ENCODE measurements at regions of chr20 and their contacts with region 1.

Region 1: GRCh38 chr20:47356526-47357295 is at the start of gene ZMYND8:
- DNase-seq: peak; percentile 87 to 99 (median 92)
- H3K4me3 ChIP-seq: no peak within 1 kb of the TSS
- H3K27ac ChIP-seq: peak within 1 kb of the TSS; percentile 83 to 95
- H3K4me1 ChIP-seq: peaks cover 54% of the 10 kb centered on the region
- H3K27me3 ChIP-seq: no peaks in the 10 kb centered on the region
- CTCF ChIP-seq: no peak
- EP300 ChIP-seq: no peak
- POLR2A ChIP-seq: no peak
- total RNA-seq, gene ZMYND8: 20.3 to 40.7 (median 31.2) TPM

Region 2: DNA sequence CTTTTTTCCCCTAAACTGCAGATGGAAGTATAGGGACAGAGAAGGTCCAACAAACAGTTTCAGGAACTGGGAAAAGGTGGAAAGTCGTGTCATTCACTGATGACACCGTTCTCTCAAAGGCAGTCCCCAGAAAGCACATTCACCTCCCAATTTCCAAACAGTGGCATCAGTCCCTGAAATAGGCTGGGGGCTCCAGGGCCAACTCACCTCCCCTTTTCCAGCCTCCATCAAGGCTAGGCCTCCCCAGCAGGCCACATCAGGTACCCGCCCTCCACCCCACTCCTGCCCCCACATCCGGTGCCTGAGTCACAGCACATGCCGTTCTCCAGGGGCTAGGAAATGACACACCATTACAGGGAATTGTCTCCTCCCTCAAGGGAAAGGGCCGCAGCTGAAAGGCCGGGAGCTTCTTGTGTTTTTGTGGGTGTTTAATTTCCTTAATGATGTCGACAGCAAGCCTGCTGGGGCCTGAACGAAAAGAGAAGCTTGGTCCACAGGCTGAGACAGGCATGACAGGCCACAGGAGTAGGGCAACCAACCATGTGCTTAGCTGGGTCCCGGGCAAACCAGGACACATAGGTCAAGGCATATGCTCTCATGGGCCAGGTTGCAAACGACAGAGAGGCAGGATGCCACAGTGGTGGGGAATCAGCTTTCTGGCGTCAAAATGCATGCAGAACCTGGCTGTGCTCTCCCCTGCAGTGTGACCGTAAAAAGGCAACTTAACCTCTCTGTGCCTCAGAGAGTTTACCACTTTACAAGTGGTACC is 39.4 kb before region 1 on chr20:
- intact Hi-C with region 1: loop called (anchors 2 to 5 kb)
- DNase-seq: peak; percentile 63 to 85 (median 73)
- H3K4me3 ChIP-seq: no peak overlapping the region
- H3K27ac ChIP-seq: peak overlapping the region; percentile 94 to 95
- H3K4me1 ChIP-seq: peaks cover 40% of the 10 kb centered on the region
- H3K27me3 ChIP-seq: no peaks in the 10 kb centered on the region
- CTCF ChIP-seq: no peak
- EP300 ChIP-seq: peak; percentile 98
- POLR2A ChIP-seq: peak; percentile 57

Measured in ovary (tissue), 10 donors.